ENCODE measurements at regions of chr14 and their contacts with region 1.

Region 1: GRCh38 chr14:76956316-76957090 is 72.0 kb downstream of the IRF2BPL start:
- DNase-seq: peak; percentile 93 to 94 (median 94)
- ATAC-seq: peak; percentile 69 to 82 (median 78)
- H3K4me3 ChIP-seq: peak overlapping the region; percentile 35 to 57 (median 44)
- H3K27ac ChIP-seq: peak overlapping the region; percentile 90 to 93 (median 92)
- H3K4me1 ChIP-seq: peaks cover 0 to 45% (median 16%) of the 10 kb centered on the region in 4 donors
- H3K27me3 ChIP-seq: no peaks in the 10 kb centered on the region
- CTCF ChIP-seq: peak in 2 of 4 donors; percentile 10 to 28
- POLR2A ChIP-seq: peak; percentile 58

Region 2: DNA sequence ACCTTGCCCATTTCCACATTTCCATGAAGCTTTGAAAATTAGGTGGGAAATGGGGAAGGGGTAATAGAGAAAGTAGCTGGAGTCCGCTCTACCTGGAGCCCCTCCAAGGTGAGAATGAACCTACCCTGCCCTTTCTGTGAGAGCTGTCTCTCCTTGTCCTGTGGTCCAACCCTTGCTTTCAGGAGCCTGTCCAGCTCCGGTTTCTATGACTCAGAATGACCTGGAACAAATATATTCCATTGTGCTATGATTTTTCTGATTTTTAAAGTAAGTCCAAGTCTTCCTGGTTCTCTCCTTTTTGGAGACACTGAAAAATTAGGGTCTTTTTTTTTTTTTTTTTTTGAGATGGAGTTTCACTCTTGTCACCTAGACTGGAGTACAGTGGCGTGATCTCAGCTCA is 284.4 kb before region 1 on chr14:
- intact Hi-C with region 1: no loop called
- DNase-seq: no peak
- ATAC-seq: no peak
- H3K4me3 ChIP-seq: no peak overlapping the region
- H3K27ac ChIP-seq: no peak overlapping the region
- H3K4me1 ChIP-seq: no peaks in the 10 kb centered on the region
- H3K27me3 ChIP-seq: no peaks in the 10 kb centered on the region
- CTCF ChIP-seq: no peak
- POLR2A ChIP-seq: no peak

Region 3: DNA sequence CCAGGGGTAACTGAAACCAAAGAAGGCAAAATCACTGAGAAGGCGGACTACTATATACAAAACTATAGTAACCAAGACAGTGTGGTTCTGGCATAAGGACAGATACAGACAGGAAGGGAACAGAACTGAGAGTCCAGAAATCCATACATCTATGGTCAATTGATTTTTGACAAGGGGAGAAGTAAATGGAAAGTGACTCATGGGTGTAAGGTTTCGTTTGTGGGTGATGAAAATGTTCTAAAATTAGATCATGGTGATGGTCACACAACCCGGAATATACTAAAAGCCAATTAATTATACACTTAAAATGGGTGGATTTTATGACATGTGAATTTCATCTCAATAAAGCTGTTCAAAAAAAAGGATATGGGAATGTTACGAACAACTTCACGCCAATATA is 162.5 kb before region 1 on chr14:
- intact Hi-C with region 1: no loop called
- DNase-seq: no peak
- ATAC-seq: no peak
- H3K4me3 ChIP-seq: no peak overlapping the region
- H3K27ac ChIP-seq: no peak overlapping the region
- H3K4me1 ChIP-seq: no peaks in the 10 kb centered on the region
- H3K27me3 ChIP-seq: no peaks in the 10 kb centered on the region
- CTCF ChIP-seq: no peak
- POLR2A ChIP-seq: no peak

Region 4: GRCh38 chr14:77028384-77029231 is 72.1 kb after region 1 on chr14 and contains the start of gene IRF2BPL:
- intact Hi-C with region 1: loop called in 1 of 2 experiments (anchors 10 kb)
- DNase-seq: peak; percentile 99 to 100 (median 99)
- ATAC-seq: peak; percentile 54 to 76 (median 64)
- H3K4me3 ChIP-seq: peak within 1 kb of the TSS; percentile 64 to 92 (median 73)
- H3K27ac ChIP-seq: peak within 1 kb of the TSS; percentile 100
- H3K4me1 ChIP-seq: peaks cover 0 to 64% (median 25%) of the 10 kb centered on the region in 4 donors
- H3K27me3 ChIP-seq: no peaks in the 10 kb centered on the region
- CTCF ChIP-seq: no peak
- POLR2A ChIP-seq: peak; percentile 99
- total RNA-seq, gene IRF2BPL: 11.7 to 18.1 (median 13.7) TPM